ENCODE measurements at regions of chr1 and their contacts with region 1.

Region 1: DNA sequence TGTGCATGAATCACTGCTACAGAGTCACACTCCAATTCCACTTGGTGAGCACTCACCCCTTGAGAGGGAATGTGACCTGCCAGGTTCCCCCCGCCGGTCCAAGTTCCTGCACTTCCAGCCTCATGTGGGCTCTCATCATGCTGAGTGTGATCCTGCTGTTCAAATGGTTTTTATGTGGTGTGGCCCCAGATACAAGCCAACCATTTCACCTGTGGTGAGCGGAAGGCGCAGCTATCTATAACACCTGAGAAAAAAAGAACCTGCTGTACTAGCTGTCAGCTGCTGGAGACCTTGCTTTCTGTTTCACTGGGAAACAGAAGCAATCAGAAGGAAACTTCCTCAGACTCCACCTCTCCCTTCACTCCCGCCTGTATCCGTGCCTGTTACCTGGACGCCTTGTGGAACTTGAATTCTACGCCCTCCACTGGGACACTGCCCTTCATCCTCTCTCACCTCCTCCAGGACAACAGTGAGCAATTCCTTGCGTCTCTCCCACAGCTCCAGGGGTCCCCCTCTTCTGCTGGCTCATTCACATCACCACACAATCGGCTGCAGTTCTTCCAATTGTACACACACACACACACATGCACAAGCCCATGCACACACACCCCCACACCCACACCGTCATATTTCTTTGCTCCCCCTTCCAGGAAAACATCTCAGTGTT is 64.4 kb upstream of the RPL11 start:
- DNase-seq: no peak
- H3K4me3 ChIP-seq: no peak overlapping the region
- H3K27ac ChIP-seq: no peak overlapping the region
- H3K4me1 ChIP-seq: no peaks in the 10 kb centered on the region
- H3K27me3 ChIP-seq: no peaks in the 10 kb centered on the region
- CTCF ChIP-seq: no peak
- EP300 ChIP-seq: no peak
- POLR2A ChIP-seq: no peak

Region 2: DNA sequence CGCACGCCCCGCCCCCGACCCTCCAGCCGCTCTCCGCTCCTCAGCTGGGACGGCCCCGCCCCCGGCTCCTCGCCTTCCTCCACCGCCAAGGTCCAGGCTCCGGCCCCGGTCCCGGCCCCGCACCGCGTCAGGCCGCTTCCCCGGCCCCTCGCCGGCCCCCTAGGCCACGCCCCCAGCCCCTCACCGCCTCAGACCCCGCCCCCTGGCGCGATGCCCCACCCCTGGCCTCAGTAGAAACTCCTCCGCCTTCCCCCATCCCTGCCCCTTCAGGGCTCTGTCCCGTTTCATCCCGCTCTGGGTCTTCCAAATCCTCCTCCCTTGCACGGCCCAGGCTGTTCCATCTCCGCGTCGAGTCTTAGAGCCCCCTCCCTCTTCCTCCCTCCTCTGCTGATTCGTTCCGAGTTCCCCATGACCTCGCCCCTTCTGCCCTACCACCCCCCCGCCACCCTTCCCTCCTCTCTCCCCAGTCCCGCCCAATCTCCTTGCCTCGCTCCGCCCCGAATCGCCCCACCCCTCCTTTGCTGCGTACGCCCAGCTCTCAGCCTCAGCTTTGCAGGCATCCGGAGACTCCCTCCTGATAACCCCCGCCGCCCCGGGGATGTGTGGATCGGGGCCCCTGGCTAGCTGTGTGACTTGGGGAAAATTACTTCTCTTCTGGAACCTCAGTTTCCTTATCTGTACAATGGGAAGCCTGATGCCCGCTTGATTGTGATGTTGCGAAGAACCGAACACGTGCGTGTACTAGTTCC is 142.8 kb before region 1 on chr1:
- intact Hi-C with region 1: no loop called
- DNase-seq: peak; percentile 97
- H3K4me3 ChIP-seq: peak overlapping the region; percentile 67 to 98 (median 94)
- H3K27ac ChIP-seq: peak overlapping the region; percentile 88 to 98 (median 94)
- H3K4me1 ChIP-seq: peaks cover 0 to 29% (median 17%) of the 10 kb centered on the region in 4 donors
- H3K27me3 ChIP-seq: no peaks in the 10 kb centered on the region
- CTCF ChIP-seq: no peak
- EP300 ChIP-seq: no peak
- POLR2A ChIP-seq: no peak

Region 3: DNA sequence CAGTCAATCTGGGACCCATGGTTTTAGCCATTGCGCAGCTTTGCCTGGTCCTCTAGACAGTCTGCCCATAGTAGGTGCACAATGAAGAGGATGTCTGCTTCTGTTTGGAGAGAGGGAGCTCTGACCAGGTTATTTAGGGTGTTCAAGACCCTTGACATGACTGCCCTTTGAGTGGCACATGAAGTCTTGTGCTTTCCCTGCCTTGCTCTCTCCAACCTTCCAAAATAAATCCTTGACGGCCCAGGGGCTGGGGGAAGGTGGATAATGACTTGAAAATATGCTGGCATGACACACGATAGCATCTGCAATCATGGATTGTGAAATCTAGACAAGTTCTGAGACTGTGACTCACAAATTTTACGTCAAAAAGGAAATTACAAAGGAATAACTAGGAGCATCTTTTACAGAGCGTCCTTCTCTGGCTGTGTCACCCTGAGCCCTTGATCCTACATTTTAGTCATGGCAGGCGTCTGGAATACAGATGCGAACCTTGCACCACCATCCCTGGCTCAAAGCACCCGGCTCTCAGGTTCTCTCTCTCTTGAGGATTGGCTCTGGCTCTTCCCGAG is 41.7 kb before region 1 on chr1:
- intact Hi-C with region 1: loop called (anchors 2 kb)
- DNase-seq: peak; percentile 72
- H3K4me3 ChIP-seq: no peak overlapping the region
- H3K27ac ChIP-seq: peak overlapping the region in 1 of 4 donors; percentile 38
- H3K4me1 ChIP-seq: no peaks in the 10 kb centered on the region
- H3K27me3 ChIP-seq: no peaks in the 10 kb centered on the region
- CTCF ChIP-seq: no peak
- EP300 ChIP-seq: no peak
- POLR2A ChIP-seq: no peak

Region 4: GRCh38 chr1:23664837-23665795 is 37.9 kb after region 1 on chr1:
- intact Hi-C with region 1: no loop called
- DNase-seq: no peak
- H3K4me3 ChIP-seq: no peak overlapping the region
- H3K27ac ChIP-seq: no peak overlapping the region
- H3K4me1 ChIP-seq: no peaks in the 10 kb centered on the region
- H3K27me3 ChIP-seq: peaks cover 0 to 6% (median 0%) of the 10 kb centered on the region in 3 donors
- CTCF ChIP-seq: no peak
- EP300 ChIP-seq: no peak
- POLR2A ChIP-seq: no peak

Measured in sigmoid colon (tissue), 7 donors.